Left colon (tissue), 2 donors: ENCODE measurements at regions of chr2 and their contacts with region 1.

Region 1: GRCh38 chr2:143259368-143259958 is 130.2 kb downstream of the ARHGAP15 start:
- DNase-seq: peak; percentile 30 to 69
- ATAC-seq: peak; percentile 60

Region 2: GRCh38 chr2:143034292-143035074 is 225.0 kb before region 1 on chr2:
- intact Hi-C with region 1: loop called in 1 of 2 experiments (anchors 10 kb)
- DNase-seq: peak; percentile 31 to 44
- ATAC-seq: peak; percentile 80

Region 3: DNA sequence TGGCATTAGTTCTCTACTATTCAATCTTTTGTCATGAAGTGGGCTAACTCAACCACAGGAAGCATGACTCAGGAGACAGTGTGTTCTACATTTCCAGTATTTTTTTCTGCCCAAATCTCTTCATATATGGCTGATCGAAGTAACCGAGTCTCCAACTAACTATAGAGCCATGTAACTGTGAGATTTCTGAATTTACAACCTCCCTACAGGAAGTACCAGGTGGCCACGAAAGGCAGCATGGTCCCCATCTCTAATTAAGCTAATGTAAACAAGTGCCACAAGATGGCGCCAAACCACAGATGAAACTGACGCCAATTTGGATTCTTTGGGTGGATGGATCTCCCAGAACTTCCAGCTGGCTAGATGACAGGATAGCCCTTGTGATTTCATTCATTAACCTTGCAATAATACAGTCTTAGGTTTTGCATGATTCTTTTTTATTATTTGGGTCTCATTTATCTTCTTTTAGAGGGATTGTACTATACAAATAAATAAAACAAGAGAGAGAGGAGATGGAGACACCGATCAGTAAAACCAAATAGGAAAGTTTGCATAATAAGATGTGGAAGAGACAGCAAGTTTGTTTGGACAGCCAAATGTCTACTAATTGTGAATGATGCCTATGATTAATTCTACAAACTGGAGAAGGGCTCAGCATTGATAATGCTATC is 148.6 kb before region 1 on chr2:
- intact Hi-C with region 1: loop called in 1 of 2 experiments (anchors 10 kb)
- DNase-seq: peak in 1 of 2 donors; percentile 63
- ATAC-seq: peak; percentile 56